CD4-positive, alpha-beta T cell (primary cell): ENCODE measurements at regions of chr11 and their contacts with region 1.

Region 1: GRCh38 chr11:72430741-72431570 is 3.4 kb downstream of the CLPB start:
- DNase-seq: peak in 12 of 14 experiments; percentile 9 to 74 (median 18)
- ATAC-seq: peak; percentile 16
- H3K4me3 ChIP-seq: no peak overlapping the region
- H3K4me3 Mint-ChIP-seq: peak overlapping the region; percentile 7
- H3K27ac ChIP-seq: no peak overlapping the region
- H3K27ac Mint-ChIP-seq: peak overlapping the region; percentile 58
- H3K4me1 ChIP-seq: peaks cover 24% of the 10 kb centered on the region
- H3K4me1 Mint-ChIP-seq: peaks cover 44% of the 10 kb centered on the region
- H3K27me3 ChIP-seq: no peaks in the 10 kb centered on the region
- H3K27me3 Mint-ChIP-seq: no peaks in the 10 kb centered on the region
- CTCF ChIP-seq: peak; percentile 67

Region 2: DNA sequence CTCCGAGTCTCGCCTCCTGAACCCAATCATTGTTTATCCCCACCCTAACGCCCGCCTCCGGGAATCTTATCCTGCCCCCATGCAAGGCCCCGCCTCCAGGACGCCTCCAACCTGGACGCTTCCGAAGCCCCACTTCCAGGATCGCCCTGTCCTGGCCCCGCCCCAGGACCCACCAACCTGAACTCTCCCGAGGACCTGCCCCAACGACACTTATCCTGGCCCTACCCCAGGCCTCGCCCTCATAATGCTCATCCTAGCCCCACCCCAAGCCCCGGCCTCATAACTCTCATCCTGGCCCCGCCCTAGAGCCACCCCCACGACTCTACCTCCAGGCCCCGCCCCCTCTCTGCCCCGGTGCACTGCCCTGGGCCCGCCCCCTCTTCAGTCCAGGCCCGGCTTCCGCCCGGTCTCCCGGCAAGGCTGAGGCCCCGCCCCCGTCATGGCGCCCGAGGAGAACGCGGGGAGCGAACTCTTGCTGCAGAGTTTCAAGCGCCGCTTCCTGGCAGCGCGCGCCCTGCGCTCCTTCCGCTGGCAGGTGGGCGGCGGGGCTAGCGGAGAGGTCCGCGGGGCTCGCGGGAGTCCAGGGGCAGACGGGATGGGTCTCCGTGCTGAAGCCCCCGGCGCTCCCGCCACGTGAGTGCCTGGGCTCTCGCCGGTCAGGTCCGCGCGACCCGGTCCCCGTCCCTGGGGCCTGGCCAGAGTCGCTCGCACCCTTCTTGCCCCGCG is 643.7 kb before region 1 on chr11:
- CTCF ChIA-PET with region 1: no interaction called
- POLR2A ChIA-PET with region 1: no interaction called
- intact Hi-C with region 1: loop called in 1 of 2 experiments (anchors 5 kb)
- DNase-seq: peak; percentile 85 to 98 (median 92)
- ATAC-seq: peak; percentile 93
- H3K4me3 ChIP-seq: peak overlapping the region; percentile 85
- H3K4me3 Mint-ChIP-seq: peak overlapping the region; percentile 99
- H3K27ac ChIP-seq: peak overlapping the region; percentile 73 to 98
- H3K27ac Mint-ChIP-seq: peak overlapping the region; percentile 99
- H3K4me1 ChIP-seq: peaks cover 13% of the 10 kb centered on the region
- H3K4me1 Mint-ChIP-seq: peaks cover 18% of the 10 kb centered on the region
- H3K27me3 ChIP-seq: no peaks in the 10 kb centered on the region
- H3K27me3 Mint-ChIP-seq: no peaks in the 10 kb centered on the region
- CTCF ChIP-seq: no peak

Region 3: DNA sequence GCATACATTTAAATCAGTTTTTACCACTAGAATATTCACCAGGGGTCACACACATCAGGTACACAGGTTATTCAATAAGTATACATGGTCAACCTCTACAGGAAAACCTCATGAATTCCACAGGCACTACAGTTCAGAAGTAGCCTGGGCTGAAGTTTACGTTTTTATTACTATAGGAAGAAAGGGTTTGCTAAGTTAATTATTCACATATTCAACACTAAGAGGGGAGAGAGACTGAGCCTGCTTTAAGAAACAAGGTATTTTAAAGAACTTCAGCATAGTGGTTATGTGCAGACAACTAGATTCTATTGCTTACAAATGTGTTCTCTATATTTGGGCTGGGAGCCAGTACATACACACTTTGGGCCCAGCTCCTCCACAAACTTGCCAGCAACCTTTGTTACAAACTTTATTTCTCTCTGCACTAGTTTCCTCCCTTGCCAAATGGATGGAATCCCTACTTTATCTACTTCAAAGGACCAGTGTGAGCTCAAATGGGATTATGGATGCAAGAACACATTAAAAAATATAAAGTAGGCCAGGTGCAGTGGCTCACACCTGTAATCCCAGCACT is 400.4 kb before region 1 on chr11:
- CTCF ChIA-PET with region 1: interaction called, 4 read pairs
- POLR2A ChIA-PET with region 1: no interaction called
- intact Hi-C with region 1: loop called in 1 of 2 experiments (anchors 5 kb)
- DNase-seq: no peak
- ATAC-seq: no peak
- H3K4me3 ChIP-seq: no peak overlapping the region
- H3K4me3 Mint-ChIP-seq: no peak overlapping the region
- H3K27ac ChIP-seq: peak overlapping the region in 1 of 2 donors; percentile 17
- H3K27ac Mint-ChIP-seq: peak overlapping the region; percentile 66
- H3K4me1 ChIP-seq: peaks cover 54% of the 10 kb centered on the region
- H3K4me1 Mint-ChIP-seq: peaks cover 68% of the 10 kb centered on the region
- H3K27me3 ChIP-seq: no peaks in the 10 kb centered on the region
- H3K27me3 Mint-ChIP-seq: no peaks in the 10 kb centered on the region
- CTCF ChIP-seq: no peak

Region 4: GRCh38 chr11:72112321-72113219 is 318.4 kb before region 1 on chr11 and contains the start of gene ANAPC15:
- CTCF ChIA-PET with region 1: interaction called, 3 read pairs
- POLR2A ChIA-PET with region 1: no interaction called
- intact Hi-C with region 1: loop called in 1 of 2 experiments (anchors 2 kb)
- DNase-seq: peak; percentile 93 to 99 (median 97)
- ATAC-seq: peak; percentile 84
- H3K4me3 ChIP-seq: peak within 1 kb of the TSS; percentile 68
- H3K4me3 Mint-ChIP-seq: peak within 1 kb of the TSS; percentile 93
- H3K27ac ChIP-seq: peak within 1 kb of the TSS; percentile 97 to 98
- H3K27ac Mint-ChIP-seq: peak within 1 kb of the TSS; percentile 98
- H3K4me1 ChIP-seq: peaks cover 17% of the 10 kb centered on the region
- H3K4me1 Mint-ChIP-seq: peaks cover 19% of the 10 kb centered on the region
- H3K27me3 ChIP-seq: no peaks in the 10 kb centered on the region
- H3K27me3 Mint-ChIP-seq: no peaks in the 10 kb centered on the region
- CTCF ChIP-seq: no peak
- total RNA-seq, gene ANAPC15: 48.8 to 52.5 TPM

Region 5: GRCh38 chr11:72222907-72223614 is 207.9 kb before region 1 on chr11:
- CTCF ChIA-PET with region 1: interaction called, 4 read pairs
- POLR2A ChIA-PET with region 1: interaction called, 4 read pairs
- intact Hi-C with region 1: loop called (anchors 2 to 5 kb)
- DNase-seq: peak; percentile 83 to 97 (median 94)
- ATAC-seq: peak; percentile 76
- H3K4me3 ChIP-seq: peak overlapping the region; percentile 91
- H3K4me3 Mint-ChIP-seq: peak overlapping the region; percentile 98
- H3K27ac ChIP-seq: peak overlapping the region; percentile 71 to 75
- H3K27ac Mint-ChIP-seq: peak overlapping the region; percentile 95
- H3K4me1 ChIP-seq: peaks cover 35% of the 10 kb centered on the region
- H3K4me1 Mint-ChIP-seq: peaks cover 32% of the 10 kb centered on the region
- H3K27me3 ChIP-seq: no peaks in the 10 kb centered on the region
- H3K27me3 Mint-ChIP-seq: no peaks in the 10 kb centered on the region
- CTCF ChIP-seq: peak; percentile 22

Region 6: DNA sequence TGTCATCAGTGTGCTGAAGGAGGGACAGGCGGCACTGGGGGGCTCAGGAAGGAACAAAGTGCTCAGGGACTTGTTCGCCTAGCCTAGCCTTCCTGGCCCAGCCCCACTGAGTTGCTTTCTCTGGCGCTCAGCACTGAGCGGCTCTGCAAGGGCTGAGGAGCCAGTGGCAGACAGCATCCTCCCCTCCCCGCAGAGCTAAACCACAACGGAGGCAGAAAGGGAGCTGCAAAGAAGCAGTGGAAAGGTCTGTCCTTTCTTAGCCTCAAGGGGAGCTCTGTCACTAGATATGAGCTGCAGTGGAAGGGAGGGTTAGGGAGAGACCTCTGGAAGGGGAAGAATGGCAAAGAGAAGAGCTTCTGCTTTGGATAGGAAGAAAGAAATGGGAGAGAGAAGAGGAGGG is 97.3 kb before region 1 on chr11:
- CTCF ChIA-PET with region 1: no interaction called
- POLR2A ChIA-PET with region 1: no interaction called
- intact Hi-C with region 1: loop called in 1 of 2 experiments (anchors 2 kb)
- DNase-seq: peak in 13 of 14 experiments; percentile 4 to 62 (median 25)
- ATAC-seq: peak; percentile 98
- H3K4me3 ChIP-seq: no peak overlapping the region
- H3K4me3 Mint-ChIP-seq: peak overlapping the region; percentile 16
- H3K27ac ChIP-seq: no peak overlapping the region
- H3K27ac Mint-ChIP-seq: peak overlapping the region; percentile 2
- H3K4me1 ChIP-seq: peaks cover 14% of the 10 kb centered on the region
- H3K4me1 Mint-ChIP-seq: peaks cover 36% of the 10 kb centered on the region
- H3K27me3 ChIP-seq: no peaks in the 10 kb centered on the region
- H3K27me3 Mint-ChIP-seq: no peaks in the 10 kb centered on the region
- CTCF ChIP-seq: no peak

Region 7: GRCh38 chr11:72814286-72815109 is 383.5 kb after region 1 on chr11 and contains the start of gene ATG16L2:
- CTCF ChIA-PET with region 1: no interaction called
- POLR2A ChIA-PET with region 1: no interaction called
- intact Hi-C with region 1: loop called in 1 of 2 experiments (anchors 10 kb)
- DNase-seq: peak in 13 of 14 experiments; percentile 78 to 95 (median 87)
- ATAC-seq: peak; percentile 81
- H3K4me3 ChIP-seq: peak within 1 kb of the TSS; percentile 96
- H3K4me3 Mint-ChIP-seq: peak within 1 kb of the TSS; percentile 99
- H3K27ac ChIP-seq: peak within 1 kb of the TSS; percentile 97 to 100
- H3K27ac Mint-ChIP-seq: peak within 1 kb of the TSS; percentile 97
- H3K4me1 ChIP-seq: peaks cover 38% of the 10 kb centered on the region
- H3K4me1 Mint-ChIP-seq: peaks cover 57% of the 10 kb centered on the region
- H3K27me3 ChIP-seq: no peaks in the 10 kb centered on the region
- H3K27me3 Mint-ChIP-seq: no peaks in the 10 kb centered on the region
- CTCF ChIP-seq: peak; percentile 29
- total RNA-seq, gene ATG16L2: 58.3 to 61.6 TPM